Ascending aorta (tissue), 2 donors: ENCODE measurements at regions of chr5 and their contacts with region 1.

Region 1: DNA sequence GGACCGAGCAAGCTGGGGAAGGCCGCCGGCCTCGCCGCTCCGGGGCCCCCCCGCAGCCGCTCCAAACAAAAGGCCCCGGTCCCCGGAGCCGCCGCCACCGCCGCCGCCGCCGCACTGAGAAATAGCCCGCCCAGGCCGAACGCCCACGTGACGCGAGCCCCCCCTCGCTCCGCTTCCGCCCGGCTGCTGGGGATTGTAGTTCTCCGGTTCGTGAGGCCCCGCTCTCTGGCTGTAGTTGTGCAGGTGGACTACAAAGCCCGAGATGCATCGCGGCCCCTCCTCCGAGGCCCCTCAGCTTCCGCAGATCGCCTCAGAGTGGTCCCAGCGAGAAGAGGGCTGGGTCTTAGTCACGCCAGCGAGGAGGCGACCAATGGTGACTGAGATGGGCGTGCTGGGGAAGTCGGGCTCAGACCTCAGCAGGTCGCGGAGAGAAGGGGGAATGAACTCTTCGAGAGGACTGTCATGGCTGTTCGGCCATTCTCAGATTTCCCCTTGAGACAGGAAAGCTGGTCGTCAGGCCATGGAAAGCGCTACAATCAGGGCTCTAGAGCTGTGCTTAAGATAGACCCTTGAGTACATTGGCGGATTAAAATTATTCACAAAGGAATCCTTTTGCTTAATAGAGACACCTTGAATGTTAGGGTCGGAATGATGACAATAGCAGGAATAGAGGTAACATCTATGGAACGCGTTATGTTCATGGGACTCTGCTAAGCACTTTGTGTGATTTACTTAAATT is 489 bp upstream of the PANK3 start:
- DNase-seq: peak; percentile 97 to 99
- H3K4me3 ChIP-seq: peak overlapping the region; percentile 81 to 85
- H3K27ac ChIP-seq: peak overlapping the region; percentile 95 to 98
- H3K4me1 ChIP-seq: peaks cover 4 to 14% of the 10 kb centered on the region in 2 donors
- H3K27me3 ChIP-seq: no peaks in the 10 kb centered on the region
- CTCF ChIP-seq: no peak

Region 2: DNA sequence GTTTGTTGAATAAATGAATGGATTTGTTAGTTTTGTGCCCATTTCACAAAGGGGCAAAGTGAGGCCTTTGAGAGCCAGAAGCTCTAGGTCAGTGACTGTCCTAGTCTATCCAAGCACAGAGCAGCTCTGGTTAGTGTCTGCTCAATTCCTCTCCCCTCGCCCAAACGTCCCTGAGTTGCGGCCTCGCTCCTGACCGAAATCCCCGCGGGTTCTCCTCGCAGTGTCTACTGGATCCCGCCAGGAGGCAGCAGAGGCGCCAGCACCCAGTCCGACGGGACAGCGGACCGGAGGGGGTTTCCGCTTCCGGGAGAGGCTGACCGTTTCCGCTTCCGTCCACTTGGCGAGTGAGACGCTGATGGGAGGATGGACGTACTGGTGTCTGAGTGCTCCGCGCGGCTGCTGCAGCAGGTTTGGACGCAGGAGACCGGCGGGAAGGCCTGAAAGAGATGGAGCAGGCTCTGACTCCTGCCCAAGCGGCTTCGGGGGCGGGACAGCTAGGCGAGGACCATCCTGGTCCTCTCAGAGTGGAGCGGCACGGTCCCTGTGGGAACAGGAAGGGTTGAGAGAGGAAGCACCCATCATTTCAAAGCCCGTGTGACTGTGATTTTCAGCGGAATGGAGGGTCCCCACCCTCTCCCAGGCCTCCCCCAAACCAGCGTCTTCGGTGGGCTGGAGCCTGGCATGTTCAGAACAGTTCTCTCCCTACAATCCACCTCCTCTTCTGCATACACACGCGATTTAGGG is 93.3 kb before region 1 on chr5 and contains the start of gene RARS1:
- intact Hi-C with region 1: loop called (anchors 1 kb)
- DNase-seq: peak; percentile 57 to 95
- H3K4me3 ChIP-seq: peak within 1 kb of the TSS; percentile 89 to 91
- H3K27ac ChIP-seq: peak within 1 kb of the TSS; percentile 78 to 81
- H3K4me1 ChIP-seq: peaks cover 3 to 9% of the 10 kb centered on the region in 2 donors
- H3K27me3 ChIP-seq: no peaks in the 10 kb centered on the region
- CTCF ChIP-seq: peak; percentile 91 to 98 (median 97)
- total RNA-seq, gene RARS1: 24.5 TPM

Region 3: GRCh38 chr5:168552146-168552545 is 27.5 kb before region 1 on chr5:
- intact Hi-C with region 1: loop called (anchors 2 kb)
- DNase-seq: no peak
- H3K4me3 ChIP-seq: no peak overlapping the region
- H3K27ac ChIP-seq: peak overlapping the region; percentile 46 to 63
- H3K4me1 ChIP-seq: peaks cover 2% of the 10 kb centered on the region in 2 donors
- H3K27me3 ChIP-seq: no peaks in the 10 kb centered on the region
- CTCF ChIP-seq: no peak

Region 4: DNA sequence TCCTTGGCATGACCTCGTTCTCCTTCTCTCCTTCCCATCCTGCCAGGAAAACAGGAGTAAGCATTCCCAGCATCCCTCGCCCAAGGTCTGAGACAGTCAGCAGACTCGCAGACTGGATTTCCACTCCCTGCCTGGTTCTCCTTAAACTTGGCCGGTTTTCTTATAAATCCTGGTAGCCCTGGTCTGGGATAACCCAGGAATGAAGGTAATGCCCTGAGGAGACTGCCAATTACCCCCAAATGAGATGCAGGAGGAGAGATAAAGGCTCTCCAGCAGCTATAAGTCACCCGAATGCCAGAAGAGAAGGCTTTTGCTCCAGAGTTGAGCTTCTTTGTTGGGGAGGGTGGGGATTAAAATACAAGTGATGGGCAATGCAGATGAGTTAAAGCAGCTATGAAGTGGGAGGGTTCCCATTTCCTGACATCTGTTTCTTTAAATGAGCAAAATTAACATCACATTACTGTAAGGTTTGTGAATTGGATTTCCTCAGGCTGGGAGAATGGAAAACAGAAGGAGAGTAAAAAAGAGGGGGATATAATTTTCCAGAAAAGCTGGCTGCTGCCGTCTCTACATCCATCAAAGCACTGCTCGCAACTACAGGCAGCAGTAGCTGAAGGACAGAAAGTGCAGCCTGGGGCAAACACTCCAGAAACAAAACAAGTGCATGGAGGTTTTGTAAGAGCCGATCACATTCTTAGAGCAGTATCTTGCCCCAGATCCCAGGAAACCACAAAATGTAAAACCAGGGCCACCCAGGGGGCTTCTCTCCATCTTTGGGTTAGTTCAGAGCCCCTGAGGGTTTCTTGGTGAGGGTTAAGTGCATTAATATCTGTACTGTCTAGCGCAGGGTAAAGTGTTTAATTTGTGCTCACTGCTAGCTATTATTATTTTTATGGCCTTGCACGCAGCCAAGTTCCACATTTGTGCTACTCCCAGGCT is 177.1 kb after region 1 on chr5:
- intact Hi-C with region 1: no loop called
- DNase-seq: no peak
- H3K4me3 ChIP-seq: no peak overlapping the region
- H3K27ac ChIP-seq: no peak overlapping the region
- H3K4me1 ChIP-seq: no peaks in the 10 kb centered on the region
- H3K27me3 ChIP-seq: no peaks in the 10 kb centered on the region
- CTCF ChIP-seq: no peak

Region 5: DNA sequence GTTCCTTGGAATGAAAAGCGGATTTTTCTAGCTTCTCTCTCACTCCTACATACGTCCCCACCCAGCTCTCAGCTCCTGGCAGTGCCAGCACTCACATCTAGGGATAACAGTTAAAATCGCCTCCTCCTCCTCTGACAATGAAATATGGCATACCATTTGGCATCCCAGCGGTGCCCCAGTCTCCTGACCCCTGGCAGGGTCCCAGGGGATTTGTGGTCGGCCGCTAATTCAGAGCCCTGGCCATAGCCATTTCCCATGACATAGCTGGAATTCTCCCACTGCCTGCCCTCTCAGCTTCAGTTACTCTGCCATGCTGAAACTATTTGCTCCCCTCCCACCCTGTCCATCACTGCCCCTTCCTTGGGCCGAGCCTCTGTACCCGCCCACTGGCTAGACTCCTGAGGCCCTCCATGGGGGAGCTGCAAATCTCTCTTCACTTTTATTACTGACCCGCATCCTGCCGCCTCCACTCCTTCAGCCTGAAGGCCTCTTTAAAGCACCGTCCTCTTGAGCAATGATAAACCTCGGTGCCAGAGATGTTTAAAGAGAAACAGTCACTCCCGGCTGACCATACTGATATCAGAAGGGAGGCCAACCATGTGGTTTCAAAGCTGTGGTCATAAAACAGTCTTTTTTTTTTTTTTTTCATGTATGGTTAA is 581.5 kb after region 1 on chr5:
- intact Hi-C with region 1: loop called (anchors 5 kb)
- DNase-seq: peak in 1 of 2 donors; percentile 82
- H3K4me3 ChIP-seq: peak overlapping the region; percentile 19 to 24
- H3K27ac ChIP-seq: peak overlapping the region; percentile 88 to 89
- H3K4me1 ChIP-seq: peaks cover 2 to 21% of the 10 kb centered on the region in 2 donors
- H3K27me3 ChIP-seq: no peaks in the 10 kb centered on the region
- CTCF ChIP-seq: no peak